Caco-2 (cell line): ENCODE measurements at regions of chr1 and their contacts with region 1.

Region 1: DNA sequence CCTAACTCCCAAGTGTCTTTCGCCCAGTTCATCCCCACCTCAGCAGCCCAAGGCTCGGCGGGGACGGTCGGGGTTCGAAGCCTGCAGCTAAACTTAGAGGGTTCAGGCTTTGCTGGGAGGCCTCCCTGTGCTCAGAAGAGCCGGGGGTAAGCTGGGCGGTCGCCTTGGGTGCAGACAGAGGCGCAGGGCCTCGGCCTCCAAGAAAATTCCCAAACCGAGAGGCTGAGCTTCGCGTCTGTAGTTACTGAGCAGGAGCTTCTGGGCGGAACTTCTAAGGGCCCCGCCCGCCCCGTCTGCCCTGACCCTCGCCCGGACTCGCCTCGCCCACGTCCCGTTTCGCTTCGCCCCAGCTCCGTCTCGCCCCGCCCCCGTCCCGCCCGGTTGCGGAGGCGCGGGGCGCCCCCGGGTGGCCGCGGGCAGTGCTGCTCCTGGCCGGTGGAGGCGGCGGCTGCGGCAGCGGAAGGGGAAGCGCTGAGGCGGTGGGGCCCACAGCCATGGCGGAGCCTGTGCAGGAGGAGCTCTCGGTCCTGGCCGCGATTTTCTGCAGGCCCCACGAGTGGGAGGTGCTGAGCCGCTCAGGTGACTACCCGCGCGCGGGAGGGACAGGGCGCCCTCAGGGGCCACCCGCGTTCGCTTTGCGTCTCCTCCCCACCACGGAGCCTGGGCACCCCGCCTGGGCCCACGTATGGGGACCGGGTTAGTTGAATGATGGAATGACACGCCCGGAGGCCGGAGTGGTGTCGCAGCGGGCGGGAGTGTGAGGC is at the start of gene RWDD3:
- DNase-seq: peak; percentile 90 to 92
- H3K4me3 ChIP-seq: peak within 1 kb of the TSS; percentile 85
- H3K4me3 Mint-ChIP-seq: peak within 1 kb of the TSS; percentile 88
- H3K27ac Mint-ChIP-seq: peak within 1 kb of the TSS; percentile 80
- H3K4me1 ChIP-seq: 0 out of 2 replicates have a peak, but pooled peaks cover 3% of the 10 kb centered on the region
- H3K4me1 Mint-ChIP-seq: peaks cover 15% of the 10 kb centered on the region
- H3K27me3 ChIP-seq: no peaks in the 10 kb centered on the region
- H3K27me3 Mint-ChIP-seq: no peaks in the 10 kb centered on the region
- CTCF ChIP-seq: peak; percentile 35 to 63
- total RNA-seq, gene RWDD3: 13.3 and 16.6 TPM in 2 replicates

Region 2: GRCh38 chr1:94854458-94855306 is 379.2 kb before region 1 on chr1:
- CTCF ChIA-PET with region 1: interaction called, 7 read pairs
- POLR2A ChIA-PET with region 1: no interaction called
- intact Hi-C with region 1: loop called (anchors 5 kb)
- DNase-seq: peak; percentile 72 to 78
- H3K4me3 ChIP-seq: no peak overlapping the region
- H3K4me3 Mint-ChIP-seq: no peak overlapping the region
- H3K27ac Mint-ChIP-seq: no peak overlapping the region
- H3K4me1 ChIP-seq: peaks cover 9% of the 10 kb centered on the region
- H3K4me1 Mint-ChIP-seq: no peaks in the 10 kb centered on the region
- H3K27me3 ChIP-seq: no peaks in the 10 kb centered on the region
- H3K27me3 Mint-ChIP-seq: no peaks in the 10 kb centered on the region
- CTCF ChIP-seq: peak; percentile 55 to 71

Region 3: GRCh38 chr1:95072532-95073419 is 161.1 kb before region 1 on chr1 and contains the start of gene ALG14:
- CTCF ChIA-PET with region 1: interaction called, 19 read pairs
- POLR2A ChIA-PET with region 1: interaction called, 7 read pairs
- intact Hi-C with region 1: no loop called
- DNase-seq: peak; percentile 87 to 93
- H3K4me3 ChIP-seq: peak within 1 kb of the TSS; percentile 57
- H3K4me3 Mint-ChIP-seq: peak within 1 kb of the TSS; percentile 99
- H3K27ac Mint-ChIP-seq: peak within 1 kb of the TSS; percentile 95
- H3K4me1 ChIP-seq: peaks cover 33% of the 10 kb centered on the region
- H3K4me1 Mint-ChIP-seq: peaks cover 11% of the 10 kb centered on the region
- H3K27me3 ChIP-seq: no peaks in the 10 kb centered on the region
- H3K27me3 Mint-ChIP-seq: no peaks in the 10 kb centered on the region
- CTCF ChIP-seq: no peak
- total RNA-seq, gene ALG14: 4.5 and 6.1 TPM in 2 replicates

Region 4: DNA sequence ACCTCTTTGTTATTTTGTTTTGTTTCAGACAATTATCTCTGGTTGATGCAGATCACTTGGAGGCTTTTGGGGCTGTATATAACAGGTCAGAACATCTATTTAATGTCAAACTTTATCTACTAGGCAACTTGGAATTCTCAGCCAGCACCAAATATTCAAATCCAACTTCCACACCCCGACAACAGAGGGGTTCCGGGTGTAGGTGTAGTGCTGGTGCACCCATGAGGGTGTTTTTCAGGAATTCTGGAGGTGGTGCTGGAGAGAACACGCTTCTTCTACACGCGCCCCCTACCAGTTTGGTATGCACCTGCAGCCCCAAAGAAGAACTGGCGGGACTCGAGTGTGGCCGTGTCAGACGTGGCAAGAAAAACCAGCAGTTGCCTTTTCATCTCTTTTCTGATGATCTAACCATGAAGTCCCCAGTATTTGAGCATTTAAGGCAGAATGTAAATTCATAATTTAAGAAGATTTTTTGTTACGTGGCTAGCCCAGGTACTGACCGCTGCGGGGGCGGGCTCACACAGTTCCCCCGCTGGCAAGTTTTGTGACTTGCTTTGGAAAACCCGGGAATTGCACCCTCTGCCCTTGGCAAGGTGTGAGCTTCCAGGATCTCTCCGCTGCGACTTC is 117.2 kb before region 1 on chr1:
- CTCF ChIA-PET with region 1: interaction called, 16 read pairs
- POLR2A ChIA-PET with region 1: interaction called, 10 read pairs
- intact Hi-C with region 1: loop called (anchors 1 kb)
- DNase-seq: peak; percentile 79
- H3K4me3 ChIP-seq: peak overlapping the region; percentile 59
- H3K4me3 Mint-ChIP-seq: peak overlapping the region; percentile 75
- H3K27ac Mint-ChIP-seq: peak overlapping the region; percentile 55
- H3K4me1 ChIP-seq: peaks cover 27% of the 10 kb centered on the region
- H3K4me1 Mint-ChIP-seq: peaks cover 14% of the 10 kb centered on the region
- H3K27me3 ChIP-seq: no peaks in the 10 kb centered on the region
- H3K27me3 Mint-ChIP-seq: no peaks in the 10 kb centered on the region
- CTCF ChIP-seq: peak; percentile 52 to 68

Region 5: GRCh38 chr1:95257758-95258157 is 23.8 kb after region 1 on chr1:
- CTCF ChIA-PET with region 1: interaction called, 6 read pairs
- POLR2A ChIA-PET with region 1: interaction called, 5 read pairs
- intact Hi-C with region 1: loop called (anchors 1 kb)
- DNase-seq: peak; percentile 63 to 72
- H3K4me3 ChIP-seq: no peak overlapping the region
- H3K4me3 Mint-ChIP-seq: peak overlapping the region; percentile 17
- H3K27ac Mint-ChIP-seq: peak overlapping the region; percentile 1
- H3K4me1 ChIP-seq: peaks cover 39% of the 10 kb centered on the region
- H3K4me1 Mint-ChIP-seq: peaks cover 22% of the 10 kb centered on the region
- H3K27me3 ChIP-seq: no peaks in the 10 kb centered on the region
- H3K27me3 Mint-ChIP-seq: no peaks in the 10 kb centered on the region
- CTCF ChIP-seq: no peak